GM10248 (cell line): ENCODE measurements at regions of chr19 and their contacts with region 1.

Region 1: DNA sequence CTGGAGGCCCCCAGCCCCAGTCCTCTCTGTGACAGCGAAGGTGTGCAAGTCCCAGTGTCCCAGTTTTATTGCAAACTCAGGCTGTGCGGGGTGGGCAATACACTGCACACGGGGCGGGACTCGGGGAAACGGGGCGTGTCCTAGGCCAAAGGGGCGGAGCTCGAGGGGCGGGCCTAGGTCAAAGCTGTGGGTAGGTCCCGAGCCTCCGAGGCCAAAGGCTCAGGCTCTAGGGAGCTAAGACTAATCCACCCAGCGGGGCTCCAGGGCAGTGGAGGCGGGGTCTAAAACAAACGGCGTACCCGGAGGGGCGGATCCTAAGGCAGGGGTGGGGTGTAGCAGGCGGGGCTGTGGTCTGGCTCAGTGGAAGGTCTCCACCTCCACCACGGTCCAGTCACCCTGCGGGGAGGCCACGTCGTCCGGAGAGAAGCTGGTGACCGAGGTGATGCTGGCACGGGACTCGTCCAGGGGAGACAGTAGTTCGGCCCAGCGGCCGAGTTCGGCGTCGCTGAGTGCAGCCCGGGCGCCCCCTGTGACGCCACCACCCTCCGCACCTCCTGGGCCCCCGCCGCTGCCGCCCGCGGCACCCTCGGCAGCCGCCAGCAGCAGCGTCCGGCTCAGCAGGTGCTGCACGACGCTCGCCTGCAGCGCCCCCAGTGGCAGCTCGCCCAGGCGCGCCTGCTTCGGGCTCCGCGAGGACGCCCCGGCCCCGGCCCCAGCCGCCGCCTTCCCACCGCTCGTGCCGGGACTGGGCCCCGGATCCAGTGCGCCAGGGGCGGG is 5.3 kb downstream of the PRR36 start:
- DNase-seq: peak; percentile 92
- CTCF ChIP-seq: peak; percentile 95

Region 2: DNA sequence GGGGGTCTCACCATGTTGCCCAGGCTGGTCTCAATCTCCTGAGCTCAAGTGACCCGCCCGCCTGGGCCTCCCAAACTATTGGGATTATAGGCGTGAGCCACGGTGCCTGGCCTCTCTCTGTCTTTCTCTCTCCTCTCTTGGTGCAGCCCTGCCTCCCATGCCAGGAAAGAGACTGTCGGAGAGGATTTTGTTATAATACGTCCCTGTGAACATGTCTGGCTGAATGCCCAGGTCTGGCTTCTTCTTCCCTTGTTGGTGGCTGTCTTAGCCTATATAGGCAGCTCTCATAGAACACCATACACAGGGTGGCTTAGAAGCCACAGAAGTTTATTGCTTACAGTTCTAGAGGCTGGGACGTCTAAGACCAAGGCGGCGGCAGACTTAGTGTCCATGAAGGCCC is 426.4 kb before region 1 on chr19:
- CTCF ChIA-PET with region 1: no interaction called
- POLR2A ChIA-PET with region 1: no interaction called
- DNase-seq: no peak
- CTCF ChIP-seq: no peak

Region 3: GRCh38 chr19:7748770-7749209 is 120.1 kb before region 1 on chr19:
- CTCF ChIA-PET with region 1: no interaction called
- POLR2A ChIA-PET with region 1: no interaction called
- DNase-seq: no peak
- CTCF ChIP-seq: no peak

Region 4: DNA sequence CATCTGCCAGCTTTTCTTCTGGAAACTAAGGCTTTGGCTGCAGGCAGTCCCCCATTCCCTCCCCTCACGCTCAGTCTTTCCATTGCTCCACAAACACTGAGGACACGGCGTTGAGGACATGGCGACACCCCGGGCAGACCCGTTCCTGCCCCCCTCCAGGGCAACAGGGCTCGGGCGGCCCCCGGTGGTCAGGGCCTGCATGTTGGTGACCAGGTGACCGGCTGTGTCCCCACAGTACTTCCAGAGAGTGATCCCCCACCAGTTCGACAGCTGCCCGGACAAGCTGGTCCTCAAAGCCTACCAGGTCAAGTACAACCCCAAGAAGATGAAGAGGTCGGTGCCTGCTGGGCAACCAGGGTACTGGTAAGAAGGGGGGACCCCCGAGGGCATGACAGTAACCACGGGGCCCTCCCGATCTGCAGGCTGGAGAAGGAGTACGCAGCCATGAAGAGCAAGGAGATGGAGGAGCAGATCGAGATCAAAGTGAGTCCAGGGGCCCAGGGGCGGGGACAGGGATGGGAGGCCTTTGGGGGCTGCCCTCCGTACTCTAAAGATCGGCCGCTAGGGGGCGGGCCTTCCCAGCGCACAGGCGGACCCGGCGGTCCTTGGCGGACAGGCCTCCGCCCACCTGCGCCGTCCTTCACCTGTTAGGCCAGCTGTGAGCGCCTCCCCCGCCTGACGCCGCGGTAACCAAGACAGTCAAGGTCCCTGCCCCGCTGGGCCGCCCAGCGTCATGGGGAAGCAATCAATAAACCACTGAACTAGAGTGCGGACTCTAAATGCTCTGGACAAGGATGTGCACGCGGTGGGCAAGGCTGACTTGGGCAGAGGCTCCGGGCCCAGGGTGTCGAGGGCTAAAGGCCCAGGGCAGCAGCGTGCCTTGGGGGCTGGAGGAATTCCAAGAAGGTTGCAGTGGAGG is 15.8 kb before region 1 on chr19:
- CTCF ChIA-PET with region 1: interaction called, 45 read pairs
- POLR2A ChIA-PET with region 1: no interaction called
- DNase-seq: peak; percentile 93
- CTCF ChIP-seq: peak; percentile 75

Region 5: GRCh38 chr19:7888145-7888825 is 19.4 kb after region 1 on chr19 and contains the start of gene LRRC8E:
- CTCF ChIA-PET with region 1: interaction called, 25 read pairs
- POLR2A ChIA-PET with region 1: interaction called, 7 read pairs
- DNase-seq: no peak
- CTCF ChIP-seq: no peak

Region 6: GRCh38 chr19:7903244-7904073 is 34.6 kb after region 1 on chr19 and contains the start of gene MAP2K7:
- CTCF ChIA-PET with region 1: interaction called, 60 read pairs
- POLR2A ChIA-PET with region 1: interaction called, 3 read pairs
- DNase-seq: peak; percentile 100
- CTCF ChIP-seq: peak; percentile 92

Region 7: GRCh38 chr19:7919610-7920518 is 51.0 kb after region 1 on chr19 and contains the start of gene SNAPC2:
- CTCF ChIA-PET with region 1: interaction called, 16 read pairs
- POLR2A ChIA-PET with region 1: interaction called, 3 read pairs
- DNase-seq: peak; percentile 92
- CTCF ChIP-seq: no peak